Heart right ventricle (tissue), 16 donors: ENCODE measurements at regions of chr4 and their contacts with region 1.

Region 1: GRCh38 chr4:22115262-22115661 is 166.7 kb upstream of the KCNIP4 start:
- DNase-seq: no peak
- ATAC-seq: no peak
- H3K4me3 ChIP-seq: no peak overlapping the region
- H3K27ac ChIP-seq: no peak overlapping the region
- H3K4me1 ChIP-seq: no peaks in the 10 kb centered on the region
- H3K27me3 ChIP-seq: no peaks in the 10 kb centered on the region
- CTCF ChIP-seq: no peak

Region 2: DNA sequence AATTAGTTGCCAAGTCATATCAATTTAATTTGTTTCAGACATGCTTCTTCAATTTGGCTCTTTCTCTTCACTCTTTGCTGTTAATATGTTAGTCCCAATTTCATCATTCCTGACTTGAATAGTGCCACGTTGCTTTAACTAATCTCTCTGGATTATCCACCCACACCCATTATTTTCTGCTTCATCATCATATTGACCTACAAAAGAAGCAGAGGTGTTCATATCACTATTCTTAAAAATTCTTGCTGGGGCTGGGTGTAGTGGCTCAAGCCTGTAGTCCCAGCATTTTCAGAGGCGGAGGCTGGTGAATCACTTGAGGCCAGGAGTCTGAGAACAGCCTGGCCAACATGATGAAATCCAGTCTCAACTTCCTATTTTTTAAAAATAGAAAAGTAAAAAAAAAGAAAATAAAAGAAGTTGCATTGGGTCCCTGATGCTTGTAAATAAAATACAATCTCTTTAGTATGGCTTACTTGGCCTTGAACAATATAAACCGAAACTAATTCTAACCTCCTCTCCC is 101.0 kb before region 1 on chr4:
- intact Hi-C with region 1: loop called in 1 of 10 experiments (anchors 10 kb)
- DNase-seq: no peak
- ATAC-seq: no peak
- H3K4me3 ChIP-seq: no peak overlapping the region
- H3K27ac ChIP-seq: no peak overlapping the region
- H3K4me1 ChIP-seq: no peaks in the 10 kb centered on the region
- H3K27me3 ChIP-seq: no peaks in the 10 kb centered on the region
- CTCF ChIP-seq: no peak

Region 3: GRCh38 chr4:22190855-22191254 is 75.6 kb after region 1 on chr4:
- intact Hi-C with region 1: no loop called
- DNase-seq: no peak
- ATAC-seq: peak in 1 of 8 donors; percentile 35
- H3K4me3 ChIP-seq: no peak overlapping the region
- H3K27ac ChIP-seq: no peak overlapping the region
- H3K4me1 ChIP-seq: no peaks in the 10 kb centered on the region
- H3K27me3 ChIP-seq: no peaks in the 10 kb centered on the region
- CTCF ChIP-seq: no peak

Region 4: DNA sequence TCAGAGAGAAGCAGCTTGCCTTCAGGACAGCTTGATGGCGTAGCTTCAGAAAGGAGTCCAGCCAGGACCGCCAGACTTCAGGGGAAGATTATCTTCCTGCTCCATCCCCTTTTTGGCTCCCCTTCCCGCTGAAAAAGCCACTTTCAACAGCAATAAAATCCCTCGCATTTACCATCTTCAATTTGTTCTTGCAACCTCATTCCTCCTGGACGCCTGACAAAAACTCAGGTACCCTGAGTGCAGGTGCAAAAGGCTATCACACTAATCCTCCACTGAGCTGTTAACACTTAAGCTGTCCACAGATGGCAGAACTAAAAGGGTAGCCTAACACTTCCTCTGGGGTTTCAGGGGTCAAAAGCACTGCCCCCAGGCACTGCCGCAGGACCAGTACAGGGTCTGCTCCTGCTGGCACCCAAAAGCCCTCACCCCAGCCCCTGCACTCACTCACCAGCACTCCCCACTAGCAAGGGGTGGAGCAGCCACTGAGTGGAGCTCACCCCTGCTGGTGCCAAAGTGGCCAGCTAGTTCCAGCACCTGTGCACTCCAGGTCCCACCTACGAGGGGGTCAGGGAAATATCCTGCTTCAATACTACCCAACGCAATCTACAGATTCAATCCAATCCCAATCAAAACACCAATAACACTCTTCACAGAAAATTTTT is 254.8 kb after region 1 on chr4:
- intact Hi-C with region 1: no loop called
- DNase-seq: no peak
- ATAC-seq: no peak
- H3K4me3 ChIP-seq: no peak overlapping the region
- H3K27ac ChIP-seq: no peak overlapping the region
- H3K4me1 ChIP-seq: no peaks in the 10 kb centered on the region
- H3K27me3 ChIP-seq: no peaks in the 10 kb centered on the region
- CTCF ChIP-seq: no peak